Calu3 (cell line): ENCODE measurements at regions of chr1 and their contacts with region 1.

Region 1: GRCh38 chr1:9145021-9145668 is 16.2 kb upstream of the GPR157 start:
- DNase-seq: peak; percentile 65
- H3K4me3 Mint-ChIP-seq: no peak overlapping the region
- H3K27ac Mint-ChIP-seq: no peak overlapping the region
- H3K4me1 Mint-ChIP-seq: peaks cover 13% of the 10 kb centered on the region
- H3K27me3 Mint-ChIP-seq: no peaks in the 10 kb centered on the region
- CTCF ChIP-seq: no peak

Region 2: DNA sequence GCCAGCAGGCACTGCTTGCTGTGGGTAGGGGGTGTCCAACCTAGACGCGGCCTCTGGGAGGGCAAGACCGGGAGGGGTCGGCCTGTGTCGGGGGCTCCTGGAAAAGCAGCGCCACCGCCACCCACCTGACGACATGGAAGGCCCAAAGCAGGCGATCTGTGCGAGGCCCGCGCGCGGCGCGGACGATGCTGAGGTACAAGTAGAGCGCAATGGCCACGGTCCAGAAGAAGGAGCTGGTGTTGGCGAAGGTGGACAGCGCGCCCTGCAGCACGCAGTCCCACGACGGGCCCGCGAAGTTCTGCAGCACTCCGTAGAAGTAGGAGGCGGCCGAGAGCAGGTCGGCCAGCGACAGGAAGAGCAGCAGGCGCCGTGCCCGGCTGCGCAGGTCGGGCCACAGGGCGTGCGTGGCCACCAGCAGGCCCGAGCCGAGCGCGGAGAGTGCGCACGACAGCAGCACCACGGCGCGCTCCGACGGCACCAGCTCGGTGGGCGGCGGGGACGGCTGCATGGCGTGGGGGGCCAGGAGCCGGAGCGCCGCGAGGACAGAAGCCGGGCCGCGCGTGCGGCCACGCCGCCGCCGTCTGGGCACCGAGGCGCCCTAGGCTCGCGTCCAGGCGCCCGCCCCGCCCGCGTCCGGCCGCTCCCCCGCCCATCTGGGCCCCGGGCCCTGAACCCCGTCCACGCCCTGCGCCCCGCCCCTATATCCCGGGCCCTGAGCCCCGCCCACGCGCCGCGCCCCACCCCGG is 16.5 kb before region 1 on chr1 and contains the start of gene GPR157:
- CTCF ChIA-PET with region 1: no interaction called
- intact Hi-C with region 1: no loop called
- DNase-seq: peak; percentile 84
- H3K4me3 Mint-ChIP-seq: peak within 1 kb of the TSS; percentile 93
- H3K27ac Mint-ChIP-seq: peak within 1 kb of the TSS; percentile 78
- H3K4me1 Mint-ChIP-seq: peaks cover 8% of the 10 kb centered on the region
- H3K27me3 Mint-ChIP-seq: no peaks in the 10 kb centered on the region
- CTCF ChIP-seq: no peak
- total RNA-seq, gene GPR157: 5.4 and 12.5 TPM in 2 replicates

Region 3: GRCh38 chr1:9196129-9197040 is 51.2 kb after region 1 on chr1:
- CTCF ChIA-PET with region 1: interaction called, 8 read pairs
- intact Hi-C with region 1: loop called (anchors 1 kb)
- DNase-seq: peak; percentile 61
- H3K4me3 Mint-ChIP-seq: no peak overlapping the region
- H3K27ac Mint-ChIP-seq: no peak overlapping the region
- H3K4me1 Mint-ChIP-seq: peaks cover 24% of the 10 kb centered on the region
- H3K27me3 Mint-ChIP-seq: peaks cover 48% of the 10 kb centered on the region
- CTCF ChIP-seq: peak; percentile 72